Heart right ventricle (tissue), 16 donors: ENCODE measurements at regions of chrX and their contacts with region 1.

Region 1: GRCh38 chrX:132219343-132219768 is at the start of gene RAP2C:
- DNase-seq: peak; percentile 63 to 76
- ATAC-seq: peak; percentile 70 to 92 (median 87)
- H3K4me3 ChIP-seq: peak within 1 kb of the TSS; percentile 35 to 89 (median 81)
- H3K27ac ChIP-seq: peak within 1 kb of the TSS; percentile 69 to 98 (median 96)
- H3K4me1 ChIP-seq: peaks cover 0 to 36% (median 6%) of the 10 kb centered on the region in 9 donors
- H3K27me3 ChIP-seq: peaks cover 0 to 20% (median 0%) of the 10 kb centered on the region in 7 donors
- CTCF ChIP-seq: peak; percentile 22 to 70 (median 60)
- total RNA-seq, gene RAP2C: 14.3 to 27.7 (median 16.5) TPM

Region 2: GRCh38 chrX:132092439-132093065 is 126.8 kb before region 1 on chrX:
- intact Hi-C with region 1: loop called in 5 of 10 experiments (anchors 2 to 10 kb)
- DNase-seq: peak in 1 of 2 donors; percentile 43
- ATAC-seq: peak in 4 of 8 donors; percentile 44 to 76 (median 54)
- H3K4me3 ChIP-seq: no peak overlapping the region
- H3K27ac ChIP-seq: no peak overlapping the region
- H3K4me1 ChIP-seq: no peaks in the 10 kb centered on the region
- H3K27me3 ChIP-seq: peaks cover 0 to 80% (median 0%) of the 10 kb centered on the region in 7 donors
- CTCF ChIP-seq: peak; percentile 54 to 78 (median 70)

Region 3: GRCh38 chrX:132171478-132172260 is 47.7 kb before region 1 on chrX:
- intact Hi-C with region 1: loop called in 2 of 10 experiments (anchors 2 to 5 kb)
- DNase-seq: no peak
- ATAC-seq: no peak
- H3K4me3 ChIP-seq: no peak overlapping the region
- H3K27ac ChIP-seq: no peak overlapping the region
- H3K4me1 ChIP-seq: no peaks in the 10 kb centered on the region
- H3K27me3 ChIP-seq: peaks cover 0 to 53% (median 0%) of the 10 kb centered on the region in 7 donors
- CTCF ChIP-seq: peak in 7 of 9 donors; percentile 10 to 43 (median 31)

Region 4: GRCh38 chrX:132266583-132267355 is 47.4 kb after region 1 on chrX:
- intact Hi-C with region 1: no loop called
- DNase-seq: no peak
- ATAC-seq: no peak
- H3K4me3 ChIP-seq: no peak overlapping the region
- H3K27ac ChIP-seq: no peak overlapping the region
- H3K4me1 ChIP-seq: peaks cover 0 to 5% (median 0%) of the 10 kb centered on the region in 9 donors
- H3K27me3 ChIP-seq: peaks cover 0 to 16% (median 0%) of the 10 kb centered on the region in 7 donors
- CTCF ChIP-seq: no peak

Region 5: GRCh38 chrX:132488819-132489577 is 269.6 kb after region 1 on chrX and contains the start of gene MBNL3:
- intact Hi-C with region 1: loop called in 1 of 10 experiments (anchors 10 kb)
- DNase-seq: peak; percentile 21 to 66
- ATAC-seq: peak; percentile 87 to 96 (median 91)
- H3K4me3 ChIP-seq: peak within 1 kb of the TSS; percentile 47 to 71 (median 60)
- H3K27ac ChIP-seq: peak within 1 kb of the TSS in 9 of 10 donors; percentile 59 to 91 (median 79)
- H3K4me1 ChIP-seq: peaks cover 0 to 37% (median 0%) of the 10 kb centered on the region in 9 donors
- H3K27me3 ChIP-seq: peaks cover 0 to 45% (median 0%) of the 10 kb centered on the region in 7 donors
- CTCF ChIP-seq: no peak
- total RNA-seq, gene MBNL3: 3.1 to 41.9 (median 6.1) TPM

Region 6: DNA sequence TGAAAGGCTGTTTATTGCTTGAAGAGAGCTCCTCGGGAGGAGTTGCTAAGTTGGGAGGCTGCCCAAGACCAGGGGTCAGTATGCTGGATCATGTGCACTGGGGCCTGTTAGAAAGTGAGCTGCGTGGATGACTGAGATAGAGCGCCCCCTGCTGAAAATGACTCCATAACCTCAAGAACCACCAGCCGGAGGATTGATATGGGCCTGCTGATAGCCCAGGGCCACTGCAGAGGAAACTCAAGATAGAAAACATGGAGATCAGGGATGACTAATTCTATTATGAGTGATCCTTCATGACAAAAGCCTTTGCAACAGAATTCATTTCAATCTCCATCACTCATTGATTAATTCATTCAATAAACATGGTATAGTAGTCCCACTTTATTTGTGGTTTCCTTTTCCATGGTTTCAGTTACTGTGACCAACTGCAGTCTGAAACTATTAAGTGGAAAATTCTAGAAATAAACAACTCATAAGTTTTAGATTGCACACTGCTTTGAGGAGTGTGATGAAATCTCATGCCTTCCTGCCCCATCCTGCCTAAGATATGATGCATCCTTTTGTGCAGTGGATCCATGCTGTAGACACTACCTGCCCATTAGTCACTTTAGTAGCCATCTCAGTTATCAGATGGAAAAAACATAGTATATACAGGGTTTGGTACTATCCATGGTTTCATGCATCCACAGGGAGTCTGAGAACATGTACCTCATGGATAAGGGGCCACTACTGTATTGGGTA is 396.2 kb after region 1 on chrX:
- intact Hi-C with region 1: loop called in 2 of 10 experiments (anchors 5 to 10 kb)
- DNase-seq: peak in 1 of 2 donors; percentile 9
- ATAC-seq: no peak
- H3K4me3 ChIP-seq: no peak overlapping the region
- H3K27ac ChIP-seq: no peak overlapping the region
- H3K4me1 ChIP-seq: no peaks in the 10 kb centered on the region
- H3K27me3 ChIP-seq: peaks cover 0 to 39% (median 0%) of the 10 kb centered on the region in 7 donors
- CTCF ChIP-seq: peak in 7 of 9 donors; percentile 30 to 64 (median 38)